K562 (cell line): ENCODE measurements at regions of chr6 and their contacts with region 1.

Region 1: GRCh38 chr6:117449549-117450439 is 24.1 kb upstream of the ROS1 start:
- DNase-seq: peak; percentile 15 to 70 (median 20)
- ATAC-seq: peak; percentile 75
- H3K4me3 ChIP-seq: no peak overlapping the region
- H3K27ac ChIP-seq: no peak overlapping the region
- H3K4me1 ChIP-seq: no peaks in the 10 kb centered on the region
- H3K27me3 ChIP-seq: peaks cover 5 to 15% of the 10 kb centered on the region in 2 experiments; a peak in 3 of 5 replicates
- CTCF ChIP-seq: peak; percentile 46 to 76 (median 64); a peak in 5 of 6 replicates
- EP300 ChIP-seq: no peak
- POLR2A ChIP-seq: no peak
- RAD21 ChIP-seq: peak; percentile 67 to 77

Region 2: GRCh38 chr6:117346142-117346930 is 103.5 kb before region 1 on chr6:
- CTCF ChIA-PET with region 1: no interaction called
- POLR2A ChIA-PET with region 1: no interaction called
- in situ Hi-C with region 1: no loop called
- intact Hi-C with region 1: loop called (anchors 2 kb)
- DNase-seq: peak in 2 of 4 experiments; percentile 3 to 13
- ATAC-seq: peak; percentile 30; the same call in 2 of the 3 replicates
- H3K4me3 ChIP-seq: no peak overlapping the region
- H3K27ac ChIP-seq: no peak overlapping the region
- H3K4me1 ChIP-seq: peaks cover 0 to 4% of the 10 kb centered on the region in 2 experiments; a peak in 2 of 5 replicates
- H3K27me3 ChIP-seq: no peaks in the 10 kb centered on the region
- CTCF ChIP-seq: peak in 1 of 3 experiments; percentile 62; a peak in 3 of 6 replicates
- EP300 ChIP-seq: no peak
- POLR2A ChIP-seq: no peak
- RAD21 ChIP-seq: peak; percentile 52 to 67; a peak in 3 of 4 replicates

Region 3: GRCh38 chr6:117404548-117404947 is 45.2 kb before region 1 on chr6:
- CTCF ChIA-PET with region 1: no interaction called
- POLR2A ChIA-PET with region 1: no interaction called
- in situ Hi-C with region 1: no loop called
- intact Hi-C with region 1: loop called (anchors 1 kb)
- DNase-seq: peak in 1 of 4 experiments; percentile 11
- ATAC-seq: peak; percentile 75
- H3K4me3 ChIP-seq: no peak overlapping the region
- H3K27ac ChIP-seq: no peak overlapping the region
- H3K4me1 ChIP-seq: no peaks in the 10 kb centered on the region; a peak in 1 of 5 replicates
- H3K27me3 ChIP-seq: no peaks in the 10 kb centered on the region; a peak in 2 of 5 replicates
- CTCF ChIP-seq: 0 out of 6 replicates have a peak, but pooled peaks of 1 of the 3 experiments have one; percentile 16
- EP300 ChIP-seq: no peak
- POLR2A ChIP-seq: no peak
- RAD21 ChIP-seq: 0 out of 4 replicates have a peak, but pooled peaks of 1 of the 2 experiments have one; percentile 14

Region 4: DNA sequence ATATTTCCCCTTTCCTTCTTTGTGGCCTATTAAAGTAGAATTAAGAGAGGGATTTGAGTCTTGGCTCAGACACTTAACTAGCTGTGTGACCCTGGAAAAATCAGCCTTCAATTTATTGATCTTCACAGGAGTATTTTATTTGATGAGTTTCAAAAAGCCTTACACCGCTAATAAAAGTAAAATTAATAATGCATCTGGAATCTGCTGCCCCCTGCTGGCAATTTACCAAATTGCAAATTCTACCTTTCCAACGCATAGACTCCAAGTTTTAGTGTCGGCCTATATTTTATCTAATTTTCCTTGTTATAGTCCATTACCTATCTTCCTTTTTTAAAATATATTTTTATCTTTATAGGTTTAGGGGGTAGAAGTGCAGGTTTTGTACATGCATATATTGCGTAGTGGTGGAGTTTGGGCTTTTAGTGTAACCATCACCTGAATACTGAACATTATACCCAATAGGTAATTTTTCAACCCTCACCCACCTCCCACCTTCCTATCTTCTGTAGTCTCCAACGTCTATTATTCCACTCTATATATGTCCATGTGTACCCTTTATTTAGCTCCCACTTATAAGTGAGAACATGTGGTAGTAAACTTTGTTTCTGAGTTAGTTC is 106.2 kb after region 1 on chr6:
- CTCF ChIA-PET with region 1: interaction called, 8 read pairs
- POLR2A ChIA-PET with region 1: interaction called, 5 read pairs
- in situ Hi-C with region 1: loop called (anchors 10 kb)
- intact Hi-C with region 1: loop called (anchors 1 kb)
- DNase-seq: peak in 3 of 4 experiments; percentile 30 to 51 (median 33)
- ATAC-seq: peak; percentile 45
- H3K4me3 ChIP-seq: no peak overlapping the region
- H3K27ac ChIP-seq: no peak overlapping the region
- H3K4me1 ChIP-seq: peaks cover 0 to 8% of the 10 kb centered on the region in 2 experiments; a peak in 3 of 5 replicates
- H3K27me3 ChIP-seq: no peaks in the 10 kb centered on the region
- CTCF ChIP-seq: peak; percentile 50 to 81 (median 55); a peak in 5 of 6 replicates
- EP300 ChIP-seq: no peak
- POLR2A ChIP-seq: no peak
- RAD21 ChIP-seq: peak; percentile 81 to 83

Region 5: DNA sequence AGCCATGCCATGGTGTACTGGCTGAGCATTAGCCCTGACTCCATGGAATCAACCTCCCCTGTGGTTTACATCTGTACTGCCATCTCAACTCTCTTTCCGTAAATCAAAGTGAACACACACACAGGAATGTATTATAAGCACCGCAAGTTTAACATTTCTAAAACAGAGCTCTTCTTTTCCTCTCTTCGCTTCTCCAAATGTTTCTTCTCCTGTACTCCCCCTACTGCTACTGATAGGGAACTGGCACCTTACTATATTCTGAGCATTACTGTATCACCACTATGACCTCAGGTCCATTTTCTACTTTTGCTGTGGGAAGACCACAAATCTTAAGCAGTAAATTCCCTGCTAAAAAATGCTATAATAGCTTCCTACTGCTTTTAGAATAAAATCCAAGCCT is 326.6 kb after region 1 on chr6:
- CTCF ChIA-PET with region 1: no interaction called
- POLR2A ChIA-PET with region 1: no interaction called
- in situ Hi-C with region 1: no loop called
- intact Hi-C with region 1: loop called (anchors 10 kb)
- DNase-seq: peak in 1 of 4 experiments; percentile 11
- ATAC-seq: peak; percentile 74
- H3K4me3 ChIP-seq: no peak overlapping the region
- H3K27ac ChIP-seq: no peak overlapping the region
- H3K4me1 ChIP-seq: no peaks in the 10 kb centered on the region
- H3K27me3 ChIP-seq: peaks cover 0 to 2% of the 10 kb centered on the region in 2 experiments; a peak in 1 of 5 replicates
- CTCF ChIP-seq: peak; percentile 28 to 33 (median 30); a peak in 2 of 6 replicates
- EP300 ChIP-seq: no peak
- POLR2A ChIP-seq: no peak
- RAD21 ChIP-seq: peak in 1 of 2 experiments; percentile 18; a peak in 1 of 4 replicates

Region 6: GRCh38 chr6:117829594-117830319 is 380.0 kb after region 1 on chr6:
- CTCF ChIA-PET with region 1: no interaction called
- POLR2A ChIA-PET with region 1: no interaction called
- in situ Hi-C with region 1: no loop called
- intact Hi-C with region 1: loop called (anchors 10 kb)
- DNase-seq: peak in 2 of 4 experiments; percentile 14 to 19
- ATAC-seq: peak; percentile 69; the same call in 2 of the 3 replicates
- H3K4me3 ChIP-seq: no peak overlapping the region
- H3K27ac ChIP-seq: no peak overlapping the region
- H3K4me1 ChIP-seq: no peaks in the 10 kb centered on the region
- H3K27me3 ChIP-seq: no peaks in the 10 kb centered on the region
- CTCF ChIP-seq: peak; percentile 39 to 47 (median 43); a peak in 5 of 6 replicates
- EP300 ChIP-seq: no peak
- POLR2A ChIP-seq: no peak
- RAD21 ChIP-seq: no peak